ENCODE measurements at regions of chr3 and their contacts with region 1.

Region 1: DNA sequence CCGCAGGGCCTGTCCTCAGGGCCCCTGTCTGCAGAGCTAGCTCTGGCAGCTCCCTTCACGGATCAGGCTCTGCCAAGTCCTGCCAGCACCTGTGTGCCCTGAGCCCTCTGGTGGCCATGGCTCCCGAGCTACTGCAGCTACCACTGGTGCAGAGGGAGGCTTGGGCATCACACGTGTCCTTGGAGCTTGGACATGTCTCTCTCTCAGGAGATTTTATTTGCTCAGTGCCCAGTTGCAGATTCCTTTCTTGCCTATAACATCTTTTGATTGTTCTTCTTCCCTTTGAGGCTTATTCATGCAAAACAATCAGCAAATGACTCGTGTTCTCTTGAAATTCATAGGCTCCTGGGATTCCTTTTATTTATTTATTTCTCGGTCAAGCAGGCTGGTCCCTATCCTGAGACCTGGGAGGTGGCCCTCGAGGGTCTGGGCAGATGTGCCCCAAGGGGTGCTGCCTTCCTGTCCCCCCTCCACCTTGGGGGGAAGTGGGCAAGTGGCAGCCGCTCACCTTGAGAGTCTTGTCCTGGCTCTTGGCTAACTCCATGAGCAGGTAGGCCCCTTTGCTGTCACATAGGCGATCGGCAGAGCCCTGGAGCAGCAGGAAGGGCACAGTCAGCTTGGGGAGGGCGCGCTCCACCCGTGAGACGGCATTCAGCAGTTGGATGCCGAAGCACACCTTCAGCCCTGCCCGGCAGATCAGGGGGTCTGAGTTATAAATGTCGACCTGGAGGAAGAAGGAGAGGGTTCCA is 21.9 kb downstream of the ABTB1 start:
- DNase-seq: peak in 31 of 35 experiments; percentile 21 to 63 (median 42)
- ATAC-seq: peak; percentile 73 to 82 (median 78)
- H3K4me3 ChIP-seq: no peak overlapping the region
- H3K4me3 Mint-ChIP-seq: no peak overlapping the region
- H3K27ac ChIP-seq: no peak overlapping the region
- H3K27ac Mint-ChIP-seq: no peak overlapping the region
- H3K4me1 ChIP-seq: peaks cover 0 to 16% of the 10 kb centered on the region in 2 experiments
- H3K4me1 Mint-ChIP-seq: peaks cover 0 to 6% (median 0%) of the 10 kb centered on the region in 3 donors
- H3K27me3 ChIP-seq: peaks cover 0 to 32% of the 10 kb centered on the region in 2 experiments
- H3K27me3 Mint-ChIP-seq: no peaks in the 10 kb centered on the region

Region 2: GRCh38 chr3:127574880-127575878 is 119.5 kb before region 1 on chr3:
- CTCF ChIA-PET with region 1: interaction called, 5 to 16 read pairs
- POLR2A ChIA-PET with region 1: no interaction called
- DNase-seq: peak; percentile 74 to 91 (median 81)
- ATAC-seq: peak; percentile 92 to 97 (median 96)
- H3K4me3 ChIP-seq: peak overlapping the region in 1 of 2 donors; percentile 2
- H3K4me3 Mint-ChIP-seq: peak overlapping the region in 2 of 3 donors; percentile 31 to 36
- H3K27ac ChIP-seq: no peak overlapping the region
- H3K27ac Mint-ChIP-seq: peak overlapping the region; percentile 69 to 81
- H3K4me1 ChIP-seq: peaks cover 0 to 19% of the 10 kb centered on the region in 2 experiments
- H3K4me1 Mint-ChIP-seq: peaks cover 14 to 17% (median 16%) of the 10 kb centered on the region in 3 donors
- H3K27me3 ChIP-seq: no peaks in the 10 kb centered on the region
- H3K27me3 Mint-ChIP-seq: no peaks in the 10 kb centered on the region